Caco-2 (cell line): ENCODE measurements at regions of chr6 and their contacts with region 1.

Region 1: DNA sequence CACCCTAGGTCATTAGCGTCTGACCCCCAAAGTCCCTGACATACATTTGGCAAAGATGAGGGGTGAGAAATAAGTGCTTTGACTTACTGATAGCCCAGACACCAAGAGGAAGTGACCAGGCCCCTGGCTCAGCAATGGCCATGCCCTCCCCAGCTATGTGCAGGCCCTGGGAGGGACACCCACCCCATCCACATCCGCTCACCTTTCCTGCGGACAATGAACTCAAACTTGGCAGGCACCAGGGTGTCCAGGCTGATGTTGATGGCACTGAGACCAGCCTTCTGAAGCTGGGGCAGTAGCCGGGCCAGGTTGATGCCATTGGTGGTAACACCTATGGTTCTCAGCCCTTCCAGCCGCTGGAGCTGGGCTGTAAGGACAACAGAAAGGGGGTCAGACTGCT is 18.4 kb downstream of the MOCS1 start:
- DNase-seq: no peak
- H3K4me3 ChIP-seq: no peak overlapping the region
- H3K4me3 Mint-ChIP-seq: no peak overlapping the region
- H3K27ac Mint-ChIP-seq: no peak overlapping the region
- H3K4me1 ChIP-seq: peaks cover 47% of the 10 kb centered on the region
- H3K4me1 Mint-ChIP-seq: peaks cover 28% of the 10 kb centered on the region
- H3K27me3 ChIP-seq: no peaks in the 10 kb centered on the region
- H3K27me3 Mint-ChIP-seq: no peaks in the 10 kb centered on the region
- CTCF ChIP-seq: no peak

Region 2: DNA sequence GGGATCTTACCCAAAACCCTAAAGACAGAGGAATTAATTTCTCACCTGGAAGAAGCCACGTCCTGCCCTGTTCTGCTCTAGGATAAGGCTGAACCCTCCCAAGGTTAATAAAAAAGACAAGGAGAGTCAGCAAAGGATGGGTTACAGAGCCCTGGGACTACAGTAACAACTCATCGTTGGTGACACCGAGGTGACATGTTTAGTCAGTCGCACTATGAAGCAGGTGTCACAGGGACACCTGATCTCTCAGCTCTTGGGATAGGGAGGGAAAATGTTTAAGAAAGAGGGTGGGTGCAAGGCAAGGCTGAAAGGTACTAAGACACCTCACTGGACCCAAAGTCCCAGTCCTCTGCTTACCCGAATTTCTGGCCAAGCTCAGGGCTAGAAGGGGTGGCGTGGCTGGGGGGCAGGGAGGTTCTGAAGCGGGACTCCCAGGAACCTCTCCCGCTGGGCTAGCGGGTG is 17.8 kb after region 1 on chr6:
- CTCF ChIA-PET with region 1: no interaction called
- POLR2A ChIA-PET with region 1: no interaction called
- intact Hi-C with region 1: loop called (anchors 1 kb)
- DNase-seq: no peak
- H3K4me3 ChIP-seq: peak overlapping the region; percentile 55
- H3K4me3 Mint-ChIP-seq: peak overlapping the region; percentile 89
- H3K27ac Mint-ChIP-seq: peak overlapping the region; percentile 63
- H3K4me1 ChIP-seq: peaks cover 10% of the 10 kb centered on the region; the same call in 1 of the 2 replicates
- H3K4me1 Mint-ChIP-seq: peaks cover 13% of the 10 kb centered on the region
- H3K27me3 ChIP-seq: no peaks in the 10 kb centered on the region
- H3K27me3 Mint-ChIP-seq: no peaks in the 10 kb centered on the region
- CTCF ChIP-seq: no peak

Region 3: GRCh38 chr6:39948199-39948791 is 32.4 kb after region 1 on chr6:
- CTCF ChIA-PET with region 1: interaction called, 3 read pairs
- POLR2A ChIA-PET with region 1: no interaction called
- intact Hi-C with region 1: loop called (anchors 1 kb)
- DNase-seq: peak; percentile 49 to 58
- H3K4me3 ChIP-seq: no peak overlapping the region
- H3K4me3 Mint-ChIP-seq: peak overlapping the region; percentile 33
- H3K27ac Mint-ChIP-seq: peak overlapping the region; percentile 86
- H3K4me1 ChIP-seq: peaks cover 37% of the 10 kb centered on the region
- H3K4me1 Mint-ChIP-seq: peaks cover 18% of the 10 kb centered on the region
- H3K27me3 ChIP-seq: no peaks in the 10 kb centered on the region
- H3K27me3 Mint-ChIP-seq: no peaks in the 10 kb centered on the region
- CTCF ChIP-seq: no peak

Region 4: GRCh38 chr6:39961178-39961577 is 45.3 kb after region 1 on chr6:
- CTCF ChIA-PET with region 1: no interaction called
- POLR2A ChIA-PET with region 1: no interaction called
- intact Hi-C with region 1: loop called (anchors 5 kb)
- DNase-seq: no peak
- H3K4me3 ChIP-seq: no peak overlapping the region
- H3K4me3 Mint-ChIP-seq: no peak overlapping the region
- H3K27ac Mint-ChIP-seq: no peak overlapping the region
- H3K4me1 ChIP-seq: peaks cover 38% of the 10 kb centered on the region
- H3K4me1 Mint-ChIP-seq: peaks cover 34% of the 10 kb centered on the region
- H3K27me3 ChIP-seq: no peaks in the 10 kb centered on the region
- H3K27me3 Mint-ChIP-seq: no peaks in the 10 kb centered on the region
- CTCF ChIP-seq: no peak

Region 5: GRCh38 chr6:40138273-40138720 is 222.4 kb after region 1 on chr6:
- CTCF ChIA-PET with region 1: no interaction called
- POLR2A ChIA-PET with region 1: no interaction called
- intact Hi-C with region 1: loop called (anchors 1 kb)
- DNase-seq: peak; percentile 79 to 85
- H3K4me3 ChIP-seq: no peak overlapping the region
- H3K4me3 Mint-ChIP-seq: peak overlapping the region; percentile 25
- H3K27ac Mint-ChIP-seq: peak overlapping the region; percentile 49
- H3K4me1 ChIP-seq: peaks cover 18% of the 10 kb centered on the region
- H3K4me1 Mint-ChIP-seq: peaks cover 10% of the 10 kb centered on the region
- H3K27me3 ChIP-seq: no peaks in the 10 kb centered on the region
- H3K27me3 Mint-ChIP-seq: no peaks in the 10 kb centered on the region
- CTCF ChIP-seq: no peak